Posterior vena cava (tissue), 2 donors: ENCODE measurements at regions of chr3 and their contacts with region 1.

Region 1: DNA sequence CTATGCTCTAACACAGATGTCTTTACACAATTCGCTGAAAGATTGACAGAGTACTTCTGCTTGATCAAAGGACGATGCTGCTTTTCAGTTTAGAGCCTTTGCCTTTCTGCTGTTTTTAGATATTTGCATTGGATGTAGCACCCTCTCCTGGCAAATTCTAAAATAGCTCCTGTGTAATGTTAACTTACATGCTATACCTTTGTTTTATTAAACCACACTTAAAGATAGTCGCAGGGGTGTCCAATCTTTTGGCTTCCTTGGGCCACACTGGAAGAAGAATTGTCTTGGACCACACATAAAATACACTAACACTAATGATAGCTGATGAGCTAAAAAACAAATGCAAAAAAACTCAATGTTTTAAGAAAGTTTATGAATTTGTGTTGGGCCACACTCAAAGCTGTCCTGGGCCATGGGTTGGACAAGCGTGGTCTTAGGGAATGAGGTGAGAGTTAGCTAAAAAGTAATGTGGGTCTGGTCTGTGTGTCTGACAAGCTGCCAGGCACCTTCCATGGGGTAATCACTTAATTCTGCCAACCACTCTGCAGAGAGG is 62.9 kb downstream of the ATG7 start:
- DNase-seq: no peak

Region 2: DNA sequence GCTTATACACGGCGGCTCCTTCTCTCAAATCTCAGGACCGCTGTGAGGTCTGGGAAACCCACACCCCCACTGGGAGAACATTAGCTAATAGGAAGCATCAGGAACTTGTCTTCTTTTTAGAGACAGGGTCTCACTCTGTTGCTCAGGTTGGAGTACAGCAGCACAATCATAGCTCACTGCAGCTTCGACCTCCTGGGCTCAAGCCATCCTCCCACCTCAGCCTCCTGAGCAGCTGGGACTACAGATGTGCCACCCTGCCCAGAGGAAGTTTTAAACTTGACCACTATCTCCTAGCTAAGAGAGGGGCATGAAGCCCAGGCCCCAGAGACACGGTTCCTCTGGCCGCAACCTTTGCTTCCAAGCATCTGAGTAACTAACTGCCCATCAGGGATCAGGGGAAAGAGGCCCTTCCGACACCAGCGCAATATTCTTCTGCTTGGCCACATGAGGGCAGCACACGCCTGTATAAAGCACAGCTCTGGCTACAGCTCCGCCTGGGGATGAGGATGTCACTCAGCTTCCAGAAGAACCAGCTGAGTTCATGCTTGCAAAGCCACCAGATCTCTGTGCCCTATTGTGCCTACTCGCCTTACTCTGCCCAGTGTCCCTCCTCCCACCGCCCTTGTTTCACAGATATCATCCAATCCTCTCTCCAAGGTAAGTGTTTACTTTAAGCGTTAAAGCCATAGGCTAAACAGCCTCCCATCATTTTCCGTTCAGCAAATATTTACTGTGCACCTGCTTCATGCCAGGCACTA is 576.6 kb before region 1 on chr3:
- intact Hi-C with region 1: loop called (anchors 10 kb)
- DNase-seq: no peak

Region 3: GRCh38 chr3:10764259-10765051 is 570.7 kb before region 1 on chr3:
- intact Hi-C with region 1: loop called (anchors 10 kb)
- DNase-seq: no peak

Region 4: DNA sequence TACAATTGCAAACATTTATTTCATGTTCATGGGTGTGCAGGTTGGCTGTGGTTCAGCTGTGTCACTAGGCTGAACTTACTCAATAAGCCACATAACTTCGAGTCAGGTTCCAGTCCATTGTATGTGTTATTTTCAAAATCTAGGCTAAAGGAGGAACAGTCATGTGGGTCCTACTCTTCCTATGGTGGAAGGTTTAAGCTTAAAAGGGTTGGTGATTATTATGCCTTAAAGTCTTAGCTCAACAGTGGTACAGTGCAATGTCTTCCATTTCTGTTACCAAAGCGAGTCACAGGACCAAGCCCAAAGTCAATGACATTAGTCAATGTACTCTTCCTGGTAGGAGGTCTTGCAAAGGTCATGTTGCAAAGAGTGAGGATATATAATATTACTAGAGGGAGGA is 15.2 kb after region 1 on chr3:
- intact Hi-C with region 1: no loop called
- DNase-seq: no peak